Posterior vena cava (tissue), 2 donors: ENCODE measurements at regions of chr6 and their contacts with region 1.

Region 1: DNA sequence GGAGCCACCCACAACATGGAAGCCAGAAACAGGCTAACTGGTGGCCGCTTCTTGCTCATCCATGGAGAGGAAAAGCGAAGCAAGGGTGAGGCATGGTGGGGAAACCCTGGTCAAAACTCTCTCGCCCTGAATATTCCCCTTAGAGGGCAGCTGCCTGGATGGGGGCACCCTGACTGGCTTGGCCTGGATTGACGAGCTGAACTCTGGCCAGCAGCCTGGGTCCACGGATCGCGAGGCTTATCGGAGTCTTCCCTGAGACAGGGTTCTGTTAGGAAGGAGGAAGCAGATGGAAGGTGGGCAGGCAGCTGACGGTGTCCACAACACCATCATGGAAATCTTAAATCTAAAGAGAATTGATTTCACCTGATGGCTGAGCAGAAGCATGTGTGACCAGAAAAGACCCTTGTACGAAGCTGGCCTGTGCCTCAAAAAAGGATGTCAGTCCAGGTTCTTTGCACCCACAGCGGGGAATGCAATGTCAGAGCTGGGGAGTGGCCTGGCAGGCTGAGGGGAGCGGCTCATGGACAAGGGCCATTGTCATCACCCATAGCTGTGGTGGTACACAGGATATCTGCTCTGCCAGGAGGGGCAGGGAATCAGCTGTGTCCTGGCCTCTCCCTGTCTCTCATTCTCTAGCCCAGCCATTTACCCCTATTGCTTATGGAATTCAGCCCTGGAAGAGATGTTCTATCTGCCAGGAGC is 109.4 kb upstream of the SNX9 start:
- DNase-seq: peak; percentile 78

Region 2: DNA sequence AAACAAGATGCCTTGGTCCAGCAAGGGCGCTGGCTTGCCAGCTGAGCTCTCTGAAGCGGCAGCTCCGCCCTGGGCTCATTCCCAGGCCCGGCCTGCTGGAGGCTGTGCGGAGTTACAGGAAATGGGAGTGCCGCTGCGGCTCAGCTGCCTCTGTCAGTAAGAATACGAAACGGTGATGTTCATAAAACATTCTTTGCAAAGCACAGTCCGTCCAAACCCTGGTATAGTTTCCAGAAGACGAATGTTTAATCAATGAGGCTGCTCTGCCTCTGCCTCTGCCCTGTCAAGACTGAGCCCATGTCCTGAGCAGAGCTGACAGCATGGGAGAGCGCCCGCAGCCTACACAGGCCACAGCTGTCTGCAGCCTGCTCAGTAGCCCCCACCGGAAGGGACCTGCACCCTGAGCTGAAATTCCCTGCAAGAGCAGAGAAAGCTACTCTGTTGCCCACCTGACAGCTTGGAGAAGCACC is 43.8 kb before region 1 on chr6:
- intact Hi-C with region 1: loop called in 1 of 2 experiments (anchors 1 kb)
- DNase-seq: peak; percentile 96

Region 3: DNA sequence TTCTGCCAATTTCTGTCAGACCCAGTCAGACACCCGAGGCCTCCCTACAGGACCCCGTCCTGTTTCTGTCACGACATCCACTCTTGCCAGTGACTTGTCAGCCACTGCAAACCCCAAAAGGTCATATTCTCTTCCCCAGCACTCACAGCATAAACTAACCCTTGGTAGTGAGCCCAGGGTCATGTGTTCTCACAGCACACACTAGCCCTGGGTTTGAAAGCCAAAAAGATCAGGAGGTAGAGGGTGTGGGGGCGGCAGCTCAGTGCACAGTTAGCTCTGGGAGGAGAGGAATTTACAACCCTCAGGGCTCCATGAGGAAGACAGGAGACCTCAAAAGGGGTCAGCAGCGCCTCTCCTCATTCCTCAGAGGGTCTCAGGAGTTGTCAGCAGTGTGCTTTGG is 99.6 kb after region 1 on chr6:
- intact Hi-C with region 1: no loop called
- DNase-seq: no peak

Region 4: GRCh38 chr6:157989541-157990289 is 276.1 kb after region 1 on chr6:
- intact Hi-C with region 1: no loop called
- DNase-seq: peak; percentile 80